ENCODE measurements at regions of chr11 and their contacts with region 1.

Region 1: DNA sequence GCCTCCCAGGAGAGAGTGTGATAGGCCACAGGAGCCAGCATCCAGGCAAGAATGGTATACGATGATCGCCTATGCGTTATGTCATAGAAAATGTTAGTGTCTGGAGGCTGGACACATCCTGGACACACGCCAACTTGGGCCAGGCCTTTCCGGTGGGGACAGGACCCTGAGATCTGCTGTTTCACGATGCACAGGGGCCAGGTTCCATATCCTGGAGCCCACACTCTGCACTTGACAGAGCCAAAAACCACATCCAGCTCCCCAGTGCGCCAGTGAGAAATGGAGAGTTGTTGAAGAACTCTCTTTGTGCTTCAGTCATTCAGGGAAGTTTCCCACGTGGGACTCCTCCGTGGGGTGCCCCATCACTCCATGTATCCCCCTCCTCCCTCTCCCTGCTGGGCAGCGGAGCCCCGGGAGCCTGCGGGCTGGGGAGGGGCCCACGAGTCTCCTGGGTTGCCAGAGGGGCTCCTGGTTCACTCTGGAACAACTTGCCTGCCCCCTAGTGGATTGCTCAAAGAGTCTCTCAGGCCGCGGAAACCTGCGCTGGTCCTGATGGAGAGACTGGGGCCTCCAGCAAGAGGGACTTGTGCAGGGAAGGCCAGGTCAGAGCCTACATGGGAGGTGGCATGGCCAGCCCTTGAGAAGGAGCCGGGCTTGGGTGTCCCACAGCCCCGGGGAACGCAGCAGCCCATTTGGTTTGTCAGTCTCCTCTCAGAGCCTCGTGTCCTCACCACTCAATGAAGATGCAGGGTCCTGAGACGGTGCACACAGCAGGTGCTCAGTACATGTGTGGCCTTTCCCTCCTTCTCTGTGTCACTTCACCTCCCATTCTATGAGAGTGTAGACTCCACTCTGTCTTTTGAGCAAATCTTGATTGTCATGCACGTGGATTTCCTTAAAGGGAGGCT is 10.2 kb upstream of the LRRC32 start:
- DNase-seq: peak; percentile 75
- H3K4me3 Mint-ChIP-seq: no peak overlapping the region
- H3K27ac Mint-ChIP-seq: no peak overlapping the region
- H3K4me1 Mint-ChIP-seq: peaks cover 7% of the 10 kb centered on the region
- H3K27me3 Mint-ChIP-seq: peaks cover 8% of the 10 kb centered on the region

Region 2: GRCh38 chr11:76598426-76598839 is 82.3 kb before region 1 on chr11:
- CTCF ChIA-PET with region 1: interaction called, 30 read pairs
- POLR2A ChIA-PET with region 1: no interaction called
- intact Hi-C with region 1: loop called (anchors 5 kb)
- DNase-seq: peak; percentile 44
- H3K4me3 Mint-ChIP-seq: no peak overlapping the region
- H3K27ac Mint-ChIP-seq: no peak overlapping the region
- H3K4me1 Mint-ChIP-seq: peaks cover 13% of the 10 kb centered on the region
- H3K27me3 Mint-ChIP-seq: no peaks in the 10 kb centered on the region

Region 3: DNA sequence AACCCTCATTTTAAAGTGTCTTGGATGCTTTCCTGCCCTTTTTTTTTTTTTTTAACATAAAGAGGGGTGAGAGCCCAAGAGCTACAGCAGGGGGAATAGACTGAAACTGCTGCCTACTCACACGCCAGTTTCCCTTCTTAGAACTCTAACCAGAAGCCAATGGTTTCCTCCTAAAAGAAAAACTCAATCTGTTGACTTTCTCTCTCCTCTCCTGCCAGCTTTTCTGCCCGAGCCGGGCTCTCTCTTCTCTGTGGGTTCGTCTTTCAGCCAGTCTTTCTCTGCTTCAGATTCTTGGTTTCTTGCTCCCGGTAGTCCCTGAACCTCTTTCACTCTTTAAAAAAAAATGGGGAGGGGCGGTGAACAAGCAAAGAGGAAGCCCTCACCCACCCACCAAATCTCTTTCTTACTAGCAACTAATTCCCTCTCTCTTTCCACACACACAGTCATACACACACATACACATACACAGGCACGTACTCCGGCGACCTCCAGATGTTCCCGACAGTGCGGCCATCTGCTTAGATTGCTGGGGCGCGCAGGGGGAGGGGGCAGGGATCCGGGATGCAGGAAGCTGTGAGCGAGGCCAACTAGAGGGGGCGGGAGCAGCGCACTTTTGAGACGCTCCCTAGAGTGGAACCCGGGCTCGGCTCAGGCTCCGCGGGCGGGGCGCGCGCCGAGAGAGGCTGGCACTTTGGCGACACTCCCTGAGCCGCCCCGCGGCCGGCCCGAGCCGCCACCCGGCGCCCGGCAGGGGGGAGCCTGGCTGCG is 101.9 kb after region 1 on chr11:
- CTCF ChIA-PET with region 1: no interaction called
- POLR2A ChIA-PET with region 1: no interaction called
- intact Hi-C with region 1: no loop called
- DNase-seq: peak; percentile 81
- H3K4me3 Mint-ChIP-seq: peak overlapping the region; percentile 66
- H3K27ac Mint-ChIP-seq: peak overlapping the region; percentile 85
- H3K4me1 Mint-ChIP-seq: peaks cover 17% of the 10 kb centered on the region
- H3K27me3 Mint-ChIP-seq: peaks cover 52% of the 10 kb centered on the region

Measured in activated CD4-positive, alpha-beta memory T cell treated with anti-CD3 and anti-CD28 coated beads for 36 hours (primary cell).